Right ventricle myocardium inferior (tissue), 1 donor: ENCODE measurements at regions of chr14 and their contacts with region 1.

Region 1: GRCh38 chr14:51651388-51652167 is at the start of gene FRMD6:
- DNase-seq: peak; percentile 94
- ATAC-seq: peak; percentile 95
- total RNA-seq, gene FRMD6: 8.9 TPM

Region 2: DNA sequence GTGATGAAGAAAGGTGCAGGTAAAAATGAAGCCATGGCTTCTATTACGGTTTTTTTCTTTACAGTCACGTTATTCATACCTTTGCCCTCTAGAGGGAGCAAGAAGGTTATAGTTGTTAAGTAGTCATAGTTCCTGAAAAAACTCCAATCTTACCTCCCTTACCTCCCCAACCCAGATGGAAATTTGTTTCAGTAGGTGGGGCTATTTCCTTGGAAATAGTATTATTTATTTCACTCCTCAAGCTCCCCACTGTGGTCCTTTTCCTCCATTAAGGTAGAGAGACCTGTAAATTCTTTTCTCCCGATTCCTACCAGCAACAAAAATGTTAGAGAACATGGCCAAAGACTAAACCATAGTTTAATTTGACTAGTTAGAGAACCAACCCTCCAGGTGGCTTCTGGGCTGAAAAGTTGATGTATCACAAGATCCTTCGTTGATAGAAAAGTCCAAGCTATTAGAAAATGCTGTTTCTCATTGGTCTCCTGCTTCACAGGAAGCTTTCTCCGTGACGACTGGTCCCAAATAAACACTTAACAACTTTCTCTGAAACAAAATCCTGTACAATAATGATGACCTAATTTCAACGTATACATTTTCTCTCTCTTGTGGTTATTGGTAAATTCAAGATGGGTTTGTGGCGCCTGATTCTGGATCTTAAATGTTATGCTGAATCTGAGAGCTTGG is 368.0 kb before region 1 on chr14:
- intact Hi-C with region 1: loop called (anchors 2 kb)
- DNase-seq: no peak
- ATAC-seq: peak; percentile 88

Region 3: GRCh38 chr14:51424561-51425251 is 226.9 kb before region 1 on chr14:
- intact Hi-C with region 1: loop called (anchors 10 kb)
- DNase-seq: no peak
- ATAC-seq: peak; percentile 92

Region 4: GRCh38 chr14:51684760-51685159 is 33.2 kb after region 1 on chr14:
- intact Hi-C with region 1: loop called (anchors 5 kb)
- DNase-seq: no peak
- ATAC-seq: no peak

Region 5: DNA sequence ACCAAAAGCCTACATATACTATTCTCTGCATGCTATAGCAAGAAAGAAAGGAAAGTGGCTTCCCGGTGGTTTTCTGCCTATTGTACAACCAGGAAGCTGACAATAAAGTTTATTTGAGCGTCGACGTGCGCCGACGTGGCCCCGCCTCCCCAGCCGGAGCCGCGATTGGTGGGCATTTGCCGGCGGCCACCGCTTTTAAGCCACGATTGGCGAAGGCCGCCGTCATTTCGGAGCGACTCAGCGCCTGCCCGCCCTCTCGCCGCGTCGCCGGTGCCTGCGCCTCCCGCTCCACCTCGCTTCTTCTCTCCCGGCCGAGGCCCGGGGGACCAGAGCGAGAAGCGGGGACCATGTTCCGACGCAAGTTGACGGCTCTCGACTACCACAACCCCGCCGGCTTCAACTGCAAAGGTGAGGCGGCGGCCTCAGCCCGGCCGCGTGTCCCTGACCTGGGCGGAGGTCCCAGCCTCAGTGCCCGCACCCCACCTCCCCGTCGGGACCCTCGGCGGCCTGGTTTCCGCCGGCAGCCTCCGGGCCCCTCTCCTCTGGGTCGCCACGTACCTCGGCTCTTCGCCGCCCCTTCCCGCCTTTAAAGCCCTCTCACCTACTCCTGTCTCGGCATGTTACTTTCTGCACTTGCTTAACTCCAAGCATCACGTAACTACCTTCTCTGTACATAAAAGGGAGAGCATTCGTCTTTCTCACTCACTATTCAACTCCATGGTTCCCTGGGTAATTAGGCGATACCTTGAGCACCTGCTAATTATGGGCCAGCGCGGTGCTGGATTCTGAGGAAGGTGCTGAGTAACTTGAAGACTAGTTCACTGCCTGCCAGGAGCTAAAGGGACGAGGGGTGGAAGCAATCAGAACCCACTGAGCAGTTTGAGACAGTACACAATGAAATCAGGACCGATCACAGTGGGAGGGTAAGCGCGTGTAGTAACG is 338.0 kb after region 1 on chr14 and contains the start of gene RTRAF:
- intact Hi-C with region 1: loop called (anchors 10 kb)
- DNase-seq: peak; percentile 98
- ATAC-seq: peak; percentile 99
- total RNA-seq, gene RTRAF: 276 TPM